Endothelial cell of umbilical vein (primary cell): ENCODE measurements at regions of chr17 and their contacts with region 1.

Region 1: GRCh38 chr17:1648963-1649843 is 463 bp downstream of the RILP start:
- DNase-seq: peak; percentile 94
- H3K4me3 ChIP-seq: peak overlapping the region; percentile 10 to 52 (median 39)
- H3K27ac ChIP-seq: peak overlapping the region; percentile 54
- H3K4me1 ChIP-seq: peaks cover 40% of the 10 kb centered on the region
- H3K27me3 ChIP-seq: no peaks in the 10 kb centered on the region
- CTCF ChIP-seq: peak; percentile 63 to 94
- POLR2A ChIP-seq: peak; percentile 46

Region 2: DNA sequence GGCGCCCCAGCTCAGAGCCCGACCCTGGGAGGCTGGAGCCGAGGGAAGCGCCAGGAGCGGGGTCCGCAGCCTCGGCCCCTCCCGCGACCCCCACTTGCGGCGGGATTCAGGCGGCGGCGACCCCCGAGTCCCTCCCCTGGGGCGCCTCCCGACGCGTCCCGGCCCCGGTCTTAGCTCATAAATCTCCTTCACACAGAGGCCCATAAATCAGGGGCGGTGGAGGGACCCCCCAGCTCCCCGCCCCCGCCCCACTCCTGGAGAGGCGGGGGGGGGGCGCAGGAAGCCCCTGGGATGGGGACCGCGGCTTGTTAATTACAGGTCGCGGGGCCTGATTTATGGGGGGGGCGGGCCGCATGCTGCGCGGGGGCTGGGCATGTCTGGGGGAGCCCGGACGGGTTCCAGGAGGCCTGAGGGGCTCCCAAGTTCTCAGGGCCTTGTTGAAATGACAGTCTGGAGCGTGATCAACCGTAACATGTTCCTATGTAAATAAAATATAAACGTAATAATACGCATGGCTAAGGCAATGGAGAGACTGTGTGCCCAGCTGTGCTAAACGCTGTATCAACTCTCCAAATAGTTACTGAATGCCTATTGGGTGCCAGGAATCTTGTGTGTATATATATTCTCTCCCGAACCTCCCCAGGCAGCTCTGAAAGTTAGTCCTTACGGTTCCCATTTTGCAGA is 389.0 kb before region 1 on chr17:
- CTCF ChIA-PET with region 1: interaction called, 16 read pairs
- POLR2A ChIA-PET with region 1: no interaction called
- dilution Hi-C with region 1: no loop called
- intact Hi-C with region 1: loop called (anchors 1 kb)
- DNase-seq: no peak
- H3K4me3 ChIP-seq: peak overlapping the region in 2 of 3 experiments; percentile 31 to 32
- H3K27ac ChIP-seq: no peak overlapping the region
- H3K4me1 ChIP-seq: no peaks in the 10 kb centered on the region
- H3K27me3 ChIP-seq: peaks cover 2 to 3% of the 10 kb centered on the region in 2 experiments
- CTCF ChIP-seq: no peak
- POLR2A ChIP-seq: no peak

Region 3: GRCh38 chr17:1275962-1276736 is 373.1 kb before region 1 on chr17:
- CTCF ChIA-PET with region 1: interaction called, 3 read pairs
- POLR2A ChIA-PET with region 1: no interaction called
- dilution Hi-C with region 1: no loop called
- intact Hi-C with region 1: loop called (anchors 1 kb)
- DNase-seq: peak; percentile 30
- H3K4me3 ChIP-seq: no peak overlapping the region
- H3K27ac ChIP-seq: no peak overlapping the region
- H3K4me1 ChIP-seq: no peaks in the 10 kb centered on the region
- H3K27me3 ChIP-seq: peaks cover 8 to 11% of the 10 kb centered on the region in 2 experiments
- CTCF ChIP-seq: peak; percentile 50 to 90
- POLR2A ChIP-seq: no peak

Region 4: DNA sequence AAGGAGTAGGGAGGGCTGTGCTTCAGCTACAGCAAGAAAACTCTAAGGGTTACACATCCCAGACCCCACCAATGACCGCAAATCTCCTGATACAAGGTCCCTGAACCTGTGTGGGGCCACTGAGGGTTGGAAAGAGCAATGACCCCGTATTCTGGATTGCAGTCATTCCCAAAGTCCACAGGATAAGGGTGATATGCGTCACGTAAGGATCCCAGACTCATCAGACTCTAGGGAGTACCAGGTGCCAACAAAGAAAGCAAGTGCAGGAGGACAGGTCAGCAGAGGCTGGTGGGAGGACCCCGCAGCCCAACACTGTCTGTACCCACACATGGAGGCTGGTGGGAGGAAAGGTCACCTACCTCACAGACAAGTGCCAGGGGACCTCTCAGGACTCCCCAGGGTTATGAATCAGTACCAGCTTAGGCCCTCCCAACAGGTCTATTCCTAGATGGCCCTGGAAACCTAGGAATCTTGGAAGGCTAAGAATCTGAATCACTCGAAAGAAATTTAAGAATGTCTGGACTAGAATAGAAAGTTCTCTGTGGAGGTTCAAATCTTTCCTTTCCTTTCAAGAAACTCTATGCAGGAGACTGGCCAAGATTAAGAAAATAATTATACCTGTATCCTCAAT is 102.8 kb before region 1 on chr17:
- CTCF ChIA-PET with region 1: no interaction called
- POLR2A ChIA-PET with region 1: no interaction called
- dilution Hi-C with region 1: no loop called
- intact Hi-C with region 1: no loop called
- DNase-seq: no peak
- H3K4me3 ChIP-seq: no peak overlapping the region
- H3K27ac ChIP-seq: no peak overlapping the region
- H3K4me1 ChIP-seq: no peaks in the 10 kb centered on the region
- H3K27me3 ChIP-seq: no peaks in the 10 kb centered on the region
- CTCF ChIP-seq: no peak
- POLR2A ChIP-seq: no peak

Region 5: DNA sequence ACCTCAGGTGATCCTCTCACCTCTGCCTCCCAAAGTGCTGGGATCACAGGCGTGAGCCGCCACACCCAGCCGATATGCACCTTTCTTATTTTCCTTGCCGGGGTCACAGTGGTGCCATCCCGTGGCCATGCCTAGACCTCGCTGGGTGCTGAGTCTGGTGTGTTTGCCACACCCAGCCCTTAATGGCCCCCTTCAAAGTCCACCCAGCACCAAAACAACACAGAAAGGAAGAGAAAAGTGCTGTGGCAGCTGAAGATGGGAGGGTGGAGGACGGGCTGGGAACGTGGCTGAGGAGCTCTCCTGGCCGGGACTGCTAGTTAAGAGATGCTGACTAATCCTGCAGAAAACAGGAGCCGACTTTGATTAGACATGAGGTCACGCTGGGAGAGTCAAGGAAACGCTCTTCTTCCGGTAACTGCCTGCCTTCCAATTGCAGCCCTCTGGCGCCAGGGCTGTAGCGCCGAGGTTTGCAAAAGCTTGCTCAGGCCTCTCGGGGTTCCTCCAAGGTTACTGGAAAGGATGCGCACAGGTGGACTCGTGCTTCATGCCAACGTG is 31.5 kb before region 1 on chr17:
- CTCF ChIA-PET with region 1: interaction called, 16 read pairs
- POLR2A ChIA-PET with region 1: no interaction called
- dilution Hi-C with region 1: no loop called
- intact Hi-C with region 1: no loop called
- DNase-seq: peak; percentile 87
- H3K4me3 ChIP-seq: no peak overlapping the region
- H3K27ac ChIP-seq: peak overlapping the region; percentile 80
- H3K4me1 ChIP-seq: peaks cover 19% of the 10 kb centered on the region
- H3K27me3 ChIP-seq: no peaks in the 10 kb centered on the region
- CTCF ChIP-seq: no peak
- POLR2A ChIP-seq: peak; percentile 52

Region 6: DNA sequence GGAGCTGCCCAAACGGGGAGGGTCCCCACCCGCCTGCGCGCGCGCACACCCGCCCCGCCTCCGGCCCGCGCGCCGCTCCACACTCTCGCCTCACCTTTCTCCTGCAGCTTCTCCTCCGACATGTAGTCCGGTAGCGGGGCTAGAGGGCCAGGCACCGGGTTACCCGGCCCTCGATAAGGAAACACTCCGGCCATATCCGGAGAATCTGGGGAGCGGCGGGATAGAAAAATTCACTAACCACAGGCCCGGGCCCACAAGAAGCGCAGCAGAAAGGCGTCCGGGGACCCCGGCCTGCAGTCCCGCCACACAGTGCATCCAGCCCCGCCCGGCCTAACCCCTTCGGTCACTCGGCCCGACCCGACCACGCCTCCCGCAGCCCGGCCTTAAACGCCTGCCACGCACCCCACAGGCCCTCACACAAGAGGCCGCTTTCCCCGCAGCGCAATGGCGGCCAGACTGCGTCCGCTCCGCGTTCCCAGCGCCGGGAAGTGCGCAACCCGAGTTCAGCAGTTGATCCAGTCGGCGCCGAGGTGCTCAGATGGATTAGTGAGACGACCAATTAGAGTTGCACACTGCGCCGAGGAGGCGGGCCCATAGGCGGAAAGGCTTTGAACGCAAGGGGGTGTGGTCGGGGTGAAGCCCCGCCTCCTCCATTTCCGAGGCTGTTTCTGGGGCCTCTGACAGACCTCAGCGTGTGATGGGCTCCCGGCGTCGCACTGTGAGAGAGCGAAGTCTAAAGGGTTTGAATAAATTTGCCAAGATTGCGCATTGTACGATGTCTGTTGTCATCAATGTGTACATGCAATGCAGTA is 35.4 kb after region 1 on chr17 and contains the start of gene PRPF8:
- CTCF ChIA-PET with region 1: interaction called, 5 read pairs
- POLR2A ChIA-PET with region 1: no interaction called
- dilution Hi-C with region 1: no loop called
- intact Hi-C with region 1: loop called (anchors 2 kb)
- DNase-seq: peak; percentile 99
- H3K4me3 ChIP-seq: peak within 1 kb of the TSS; percentile 71 to 95 (median 77)
- H3K27ac ChIP-seq: peak within 1 kb of the TSS; percentile 54
- H3K4me1 ChIP-seq: peaks cover 8% of the 10 kb centered on the region
- H3K27me3 ChIP-seq: no peaks in the 10 kb centered on the region
- CTCF ChIP-seq: no peak
- POLR2A ChIP-seq: peak; percentile 88
- total RNA-seq, gene PRPF8: 282 and 301 TPM in 2 replicates

Region 7: GRCh38 chr17:2029911-2030778 is 380.9 kb after region 1 on chr17 and contains the start of gene DPH1:
- CTCF ChIA-PET with region 1: no interaction called
- POLR2A ChIA-PET with region 1: no interaction called
- dilution Hi-C with region 1: no loop called
- intact Hi-C with region 1: no loop called
- DNase-seq: peak; percentile 88
- H3K4me3 ChIP-seq: peak within 1 kb of the TSS; percentile 81 to 97 (median 87)
- H3K27ac ChIP-seq: peak within 1 kb of the TSS; percentile 16
- H3K4me1 ChIP-seq: peaks cover 7% of the 10 kb centered on the region
- H3K27me3 ChIP-seq: peaks cover 15 to 16% of the 10 kb centered on the region in 2 experiments
- CTCF ChIP-seq: no peak
- POLR2A ChIP-seq: peak; percentile 69
- total RNA-seq, gene DPH1: 37.8 and 38.5 TPM in 2 replicates